ENCODE measurements at regions of chr4 and their contacts with region 1.

Region 1: GRCh38 chr4:107155366-107155765 is 119.3 kb upstream of the DKK2 start:
- DNase-seq: no peak
- H3K4me3 ChIP-seq: no peak overlapping the region
- H3K4me3 Mint-ChIP-seq: no peak overlapping the region
- H3K27ac ChIP-seq: no peak overlapping the region
- H3K27ac Mint-ChIP-seq: no peak overlapping the region
- H3K4me1 ChIP-seq: no peaks in the 10 kb centered on the region
- H3K4me1 Mint-ChIP-seq: no peaks in the 10 kb centered on the region
- H3K27me3 ChIP-seq: no peaks in the 10 kb centered on the region
- H3K27me3 Mint-ChIP-seq: no peaks in the 10 kb centered on the region
- CTCF ChIP-seq: no peak

Region 2: DNA sequence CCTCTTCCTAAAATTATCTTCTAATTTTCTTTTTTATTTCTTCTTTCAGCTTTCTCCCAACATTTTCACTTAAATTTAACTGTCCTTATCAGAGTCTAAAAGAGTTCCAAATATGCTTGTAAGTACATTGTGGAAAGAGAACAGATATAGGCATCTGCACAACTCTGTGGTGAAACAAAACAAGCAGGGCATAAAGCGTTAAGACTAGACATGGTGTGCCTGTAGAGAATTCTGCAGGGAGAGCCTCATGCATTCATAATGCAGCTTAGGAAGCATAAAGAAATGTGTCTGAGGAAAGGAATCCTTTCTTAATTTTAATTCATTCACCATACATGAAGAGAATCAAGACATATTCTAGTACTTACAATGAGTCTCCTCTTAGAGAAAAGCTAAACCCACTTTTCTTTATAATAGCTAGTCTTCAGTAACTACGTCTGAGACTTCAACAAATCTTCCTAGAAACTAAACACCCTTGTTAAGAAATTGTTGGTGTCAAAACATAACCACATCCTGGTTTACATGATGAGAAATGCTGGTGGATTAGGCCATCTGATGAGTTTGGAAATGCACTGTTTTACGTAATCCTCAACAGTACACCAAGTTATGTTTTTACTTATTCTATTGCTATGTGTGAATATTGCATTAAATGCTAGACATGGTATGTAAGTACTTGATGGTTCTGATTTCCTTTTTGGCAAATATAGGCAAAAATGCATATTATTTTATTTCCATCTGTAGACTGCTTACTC is 479.0 kb before region 1 on chr4:
- intact Hi-C with region 1: no loop called
- DNase-seq: peak; percentile 84 to 95 (median 95)
- H3K4me3 ChIP-seq: peak overlapping the region in 1 of 3 experiments; percentile 36
- H3K4me3 Mint-ChIP-seq: peak overlapping the region in 1 of 2 donors; percentile 70
- H3K27ac ChIP-seq: peak overlapping the region in 1 of 2 donors; percentile 66
- H3K27ac Mint-ChIP-seq: peak overlapping the region; percentile 58 to 95 (median 92)
- H3K4me1 ChIP-seq: peaks cover 34 to 40% of the 10 kb centered on the region in 2 donors
- H3K4me1 Mint-ChIP-seq: peaks cover 40% of the 10 kb centered on the region
- H3K27me3 ChIP-seq: no peaks in the 10 kb centered on the region
- H3K27me3 Mint-ChIP-seq: no peaks in the 10 kb centered on the region
- CTCF ChIP-seq: no peak

Region 3: DNA sequence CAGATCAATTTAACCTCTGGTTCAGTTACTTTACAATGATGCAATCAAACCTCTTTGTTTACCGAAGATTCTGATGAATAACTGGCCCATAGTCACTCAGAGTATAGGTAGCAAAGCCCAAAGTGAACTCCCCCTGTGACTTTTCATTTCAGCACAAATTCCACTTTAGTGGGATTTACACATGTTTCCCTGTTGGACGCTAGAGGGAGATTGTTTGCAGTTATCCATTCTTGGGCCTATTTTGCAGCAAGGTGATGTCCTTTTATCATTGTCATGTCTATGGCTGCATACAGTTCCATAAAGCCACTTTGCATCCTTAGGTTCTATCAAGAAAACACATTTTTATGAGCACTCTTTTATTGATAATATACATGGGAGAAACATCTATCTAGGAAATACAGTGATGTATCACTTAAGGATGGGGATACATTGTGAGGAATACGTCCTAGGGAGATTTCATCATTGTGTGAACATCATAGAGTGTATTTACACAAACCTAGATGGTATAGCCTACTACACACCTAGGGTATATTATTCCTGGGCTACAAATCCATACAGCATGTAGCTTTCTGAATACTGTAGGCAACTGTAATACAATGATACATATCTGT is 104.7 kb before region 1 on chr4:
- intact Hi-C with region 1: no loop called
- DNase-seq: peak in 1 of 3 donors; percentile 8
- H3K4me3 ChIP-seq: no peak overlapping the region
- H3K4me3 Mint-ChIP-seq: no peak overlapping the region
- H3K27ac ChIP-seq: no peak overlapping the region
- H3K27ac Mint-ChIP-seq: no peak overlapping the region
- H3K4me1 ChIP-seq: no peaks in the 10 kb centered on the region
- H3K4me1 Mint-ChIP-seq: no peaks in the 10 kb centered on the region
- H3K27me3 ChIP-seq: no peaks in the 10 kb centered on the region
- H3K27me3 Mint-ChIP-seq: peaks cover 0 to 3% (median 2%) of the 10 kb centered on the region in 3 donors
- CTCF ChIP-seq: peak; percentile 47

Region 4: DNA sequence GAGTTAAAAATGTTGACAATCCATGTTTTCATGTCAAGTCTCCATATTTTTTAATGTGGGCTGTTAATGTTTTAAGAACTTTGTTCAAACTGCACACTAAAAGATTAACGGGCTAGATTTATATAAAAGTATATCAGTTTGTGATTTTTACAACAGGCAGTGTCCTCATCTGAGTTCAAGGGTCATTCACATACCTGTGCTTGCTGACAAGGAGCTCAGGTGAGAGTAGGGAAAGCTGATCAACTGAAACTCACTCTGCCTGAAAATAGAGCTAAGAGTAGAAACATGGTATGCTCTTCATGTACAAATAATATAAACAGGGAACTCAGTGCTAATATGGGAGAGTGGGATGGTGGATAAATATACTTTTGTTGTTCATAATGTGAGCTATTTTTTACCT is 16.9 kb before region 1 on chr4:
- intact Hi-C with region 1: loop called in 1 of 2 experiments (anchors 1 kb)
- DNase-seq: no peak
- H3K4me3 ChIP-seq: no peak overlapping the region
- H3K4me3 Mint-ChIP-seq: no peak overlapping the region
- H3K27ac ChIP-seq: no peak overlapping the region
- H3K27ac Mint-ChIP-seq: no peak overlapping the region
- H3K4me1 ChIP-seq: no peaks in the 10 kb centered on the region
- H3K4me1 Mint-ChIP-seq: no peaks in the 10 kb centered on the region
- H3K27me3 ChIP-seq: no peaks in the 10 kb centered on the region
- H3K27me3 Mint-ChIP-seq: peaks cover 0 to 2% (median 1%) of the 10 kb centered on the region in 3 donors
- CTCF ChIP-seq: no peak

Region 5: DNA sequence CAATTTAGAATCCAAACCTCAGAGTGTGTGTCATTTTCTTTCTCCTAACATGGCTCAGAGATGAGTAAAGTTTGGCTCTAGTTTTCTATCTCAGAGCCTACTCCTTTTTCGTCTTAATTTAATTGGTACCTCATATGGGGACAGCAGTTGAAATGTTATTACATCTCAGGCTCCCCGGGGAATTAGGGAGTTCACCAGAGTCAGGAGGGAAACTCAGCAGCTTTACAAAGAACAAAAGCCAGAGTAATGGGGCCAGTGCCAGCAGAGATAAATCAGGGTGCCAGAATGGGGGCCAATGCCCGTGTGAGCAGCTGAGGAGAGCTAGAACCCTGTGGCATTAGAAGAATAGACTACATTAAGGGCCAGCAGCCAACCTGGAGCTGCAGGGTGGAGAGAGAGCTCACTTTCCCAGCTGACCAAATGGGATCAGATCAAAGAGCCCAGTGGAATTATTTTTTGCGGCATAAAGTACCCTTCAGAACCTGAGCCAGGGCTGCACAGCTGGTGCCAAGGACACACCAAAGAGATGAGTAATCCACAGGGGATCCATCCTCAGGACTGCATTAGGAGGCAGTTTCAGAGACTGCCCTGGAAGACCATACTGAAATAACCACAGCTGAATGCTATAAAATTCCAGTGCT is 87.9 kb after region 1 on chr4:
- intact Hi-C with region 1: no loop called
- DNase-seq: no peak
- H3K4me3 ChIP-seq: no peak overlapping the region
- H3K4me3 Mint-ChIP-seq: no peak overlapping the region
- H3K27ac ChIP-seq: no peak overlapping the region
- H3K27ac Mint-ChIP-seq: no peak overlapping the region
- H3K4me1 ChIP-seq: no peaks in the 10 kb centered on the region
- H3K4me1 Mint-ChIP-seq: no peaks in the 10 kb centered on the region
- H3K27me3 ChIP-seq: no peaks in the 10 kb centered on the region
- H3K27me3 Mint-ChIP-seq: peaks cover 0 to 5% (median 0%) of the 10 kb centered on the region in 3 donors
- CTCF ChIP-seq: no peak